IMR-90 (cell line): ENCODE measurements at regions of chr3 and their contacts with region 1.

Region 1: GRCh38 chr3:9439331-9439730 is 41.9 kb downstream of the SETD5 start:
- DNase-seq: peak; percentile 33
- ATAC-seq: peak; percentile 33; the same call in 1 of the 2 replicates
- H3K4me3 ChIP-seq: no peak overlapping the region
- H3K27ac ChIP-seq: no peak overlapping the region
- H3K4me1 ChIP-seq: no peaks in the 10 kb centered on the region; the same call in 1 of the 2 replicates
- H3K27me3 ChIP-seq: no peaks in the 10 kb centered on the region
- CTCF ChIP-seq: no peak
- POLR2A ChIP-seq: no peak
- RAD21 ChIP-seq: no peak

Region 2: GRCh38 chr3:9373465-9373864 is 65.9 kb before region 1 on chr3:
- CTCF ChIA-PET with region 1: no interaction called
- POLR2A ChIA-PET with region 1: no interaction called
- dilution Hi-C with region 1: no loop called
- in situ Hi-C with region 1: loop called (anchors 5 kb)
- intact Hi-C with region 1: no loop called
- DNase-seq: no peak
- ATAC-seq: no peak
- H3K4me3 ChIP-seq: no peak overlapping the region
- H3K27ac ChIP-seq: no peak overlapping the region
- H3K4me1 ChIP-seq: no peaks in the 10 kb centered on the region
- H3K27me3 ChIP-seq: no peaks in the 10 kb centered on the region
- CTCF ChIP-seq: no peak
- POLR2A ChIP-seq: no peak
- RAD21 ChIP-seq: no peak

Region 3: GRCh38 chr3:9396700-9397521 is 42.4 kb before region 1 on chr3:
- CTCF ChIA-PET with region 1: no interaction called
- POLR2A ChIA-PET with region 1: no interaction called
- dilution Hi-C with region 1: no loop called
- in situ Hi-C with region 1: no loop called
- intact Hi-C with region 1: loop called (anchors 5 kb)
- DNase-seq: peak; percentile 100
- ATAC-seq: peak; percentile 75
- H3K4me3 ChIP-seq: peak overlapping the region; percentile 74
- H3K27ac ChIP-seq: peak overlapping the region; percentile 96
- H3K4me1 ChIP-seq: peaks cover 4% of the 10 kb centered on the region; the same call in 1 of the 2 replicates
- H3K27me3 ChIP-seq: no peaks in the 10 kb centered on the region
- CTCF ChIP-seq: no peak
- POLR2A ChIP-seq: peak; percentile 98
- RAD21 ChIP-seq: no peak

Region 4: GRCh38 chr3:9473496-9474065 is 34.2 kb after region 1 on chr3:
- CTCF ChIA-PET with region 1: no interaction called
- POLR2A ChIA-PET with region 1: no interaction called
- dilution Hi-C with region 1: no loop called
- in situ Hi-C with region 1: loop called (anchors 5 kb)
- intact Hi-C with region 1: loop called (anchors 5 kb)
- DNase-seq: no peak
- ATAC-seq: no peak
- H3K4me3 ChIP-seq: no peak overlapping the region
- H3K27ac ChIP-seq: no peak overlapping the region
- H3K4me1 ChIP-seq: no peaks in the 10 kb centered on the region
- H3K27me3 ChIP-seq: no peaks in the 10 kb centered on the region
- CTCF ChIP-seq: no peak
- POLR2A ChIP-seq: no peak
- RAD21 ChIP-seq: no peak

Region 5: GRCh38 chr3:9659849-9660248 is 220.5 kb after region 1 on chr3:
- CTCF ChIA-PET with region 1: no interaction called
- POLR2A ChIA-PET with region 1: no interaction called
- dilution Hi-C with region 1: no loop called
- in situ Hi-C with region 1: no loop called
- intact Hi-C with region 1: no loop called
- DNase-seq: no peak
- ATAC-seq: no peak
- H3K4me3 ChIP-seq: no peak overlapping the region
- H3K27ac ChIP-seq: no peak overlapping the region
- H3K4me1 ChIP-seq: no peaks in the 10 kb centered on the region
- H3K27me3 ChIP-seq: no peaks in the 10 kb centered on the region
- CTCF ChIP-seq: no peak
- POLR2A ChIP-seq: no peak
- RAD21 ChIP-seq: no peak